A549 (cell line): ENCODE measurements at regions of chr1 and their contacts with region 1.

Region 1: GRCh38 chr1:204431310-204432165 is 19.9 kb upstream of the PPP1R15B start:
- DNase-seq: peak; percentile 79
- ATAC-seq: peak; percentile 82 to 95
- H3K4me3 ChIP-seq: no peak overlapping the region
- H3K27ac ChIP-seq: peak overlapping the region; percentile 28 to 51; a peak in 4 of 6 replicates
- H3K4me1 ChIP-seq: peaks cover 22% of the 10 kb centered on the region
- CTCF ChIP-seq: peak; percentile 92
- EP300 ChIP-seq: no peak
- POLR2A ChIP-seq: 0 out of 2 replicates have a peak, but pooled peaks have one; percentile 10
- RAD21 ChIP-seq: peak; percentile 72

Region 2: GRCh38 chr1:204417231-204417997 is 14.1 kb before region 1 on chr1:
- CTCF ChIA-PET with region 1: interaction called, 40 read pairs
- POLR2A ChIA-PET with region 1: interaction called, 11 read pairs
- DNase-seq: peak; percentile 94 to 97
- ATAC-seq: peak; percentile 91 to 96
- H3K4me3 ChIP-seq: peak overlapping the region; percentile 42
- H3K27ac ChIP-seq: peak overlapping the region; percentile 98 to 100
- H3K4me1 ChIP-seq: peaks cover 76% of the 10 kb centered on the region
- CTCF ChIP-seq: no peak
- EP300 ChIP-seq: peak in 1 of 2 experiments; percentile 38; a peak in 2 of 5 replicates
- POLR2A ChIP-seq: no peak
- RAD21 ChIP-seq: no peak

Region 3: DNA sequence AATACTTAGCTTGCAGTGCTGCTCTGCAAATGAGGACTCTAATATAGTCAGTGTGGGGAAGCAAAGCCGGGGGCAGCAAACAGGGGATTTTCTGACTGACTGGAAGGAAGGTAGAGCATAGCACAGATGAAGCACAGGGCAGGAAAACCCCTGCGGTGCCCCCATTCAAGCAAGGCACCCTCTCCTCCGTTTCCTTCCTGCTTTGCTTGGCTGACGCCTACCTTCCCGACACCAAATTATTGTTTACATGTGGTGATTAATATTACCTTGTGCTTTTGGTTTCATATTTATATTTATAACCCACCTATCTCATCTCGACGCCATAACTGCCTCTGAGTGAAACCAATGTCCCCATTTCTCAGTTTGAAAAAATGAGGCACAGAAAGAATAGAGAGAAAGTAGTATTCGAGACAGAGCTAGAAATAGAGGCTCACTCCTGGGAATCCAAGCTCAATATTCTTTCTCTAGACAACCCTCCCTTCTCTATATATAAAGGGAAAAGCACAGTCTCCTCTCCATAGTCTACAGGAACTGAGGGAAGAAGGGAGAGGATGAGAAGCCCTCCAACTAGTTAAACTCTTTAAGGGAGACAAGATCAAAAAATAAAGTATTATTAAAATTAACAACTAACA is 21.7 kb after region 1 on chr1:
- CTCF ChIA-PET with region 1: interaction called, 276 read pairs
- POLR2A ChIA-PET with region 1: no interaction called
- DNase-seq: no peak
- ATAC-seq: no peak
- H3K4me3 ChIP-seq: no peak overlapping the region
- H3K27ac ChIP-seq: no peak overlapping the region
- H3K4me1 ChIP-seq: peaks cover 36% of the 10 kb centered on the region
- CTCF ChIP-seq: no peak
- EP300 ChIP-seq: no peak
- POLR2A ChIP-seq: no peak
- RAD21 ChIP-seq: no peak

Region 4: DNA sequence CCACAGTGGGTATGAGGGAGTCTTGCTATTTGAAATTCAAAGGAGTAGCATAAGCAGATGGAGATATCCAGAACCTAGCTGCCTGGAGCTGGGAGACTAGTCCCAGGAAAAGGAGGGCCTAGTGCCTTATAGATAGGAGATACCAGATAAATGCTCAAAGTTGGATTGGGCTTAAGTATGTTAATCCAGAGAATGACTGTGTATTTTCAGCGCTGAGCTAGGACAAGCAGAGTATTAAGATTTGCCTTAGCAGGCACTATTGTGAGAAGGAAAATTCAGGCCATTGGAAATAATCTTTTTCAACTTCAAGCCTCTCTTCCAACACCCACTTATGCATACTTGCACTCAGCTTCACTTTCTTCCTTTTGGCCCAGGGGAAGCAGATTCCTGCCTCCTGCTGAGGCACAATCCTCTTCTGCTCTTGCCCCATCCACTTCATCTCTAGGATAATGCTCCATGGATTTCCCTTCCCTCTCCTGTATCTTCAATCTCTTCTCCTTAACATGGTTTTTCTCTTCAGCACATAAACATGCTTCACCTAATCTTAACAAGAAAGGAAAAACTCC is 41.9 kb after region 1 on chr1:
- CTCF ChIA-PET with region 1: interaction called, 13 read pairs
- POLR2A ChIA-PET with region 1: no interaction called
- DNase-seq: no peak
- ATAC-seq: no peak
- H3K4me3 ChIP-seq: no peak overlapping the region
- H3K27ac ChIP-seq: no peak overlapping the region
- H3K4me1 ChIP-seq: peaks cover 8% of the 10 kb centered on the region; the same call in 1 of the 3 replicates
- CTCF ChIP-seq: no peak
- EP300 ChIP-seq: no peak
- POLR2A ChIP-seq: no peak
- RAD21 ChIP-seq: no peak

Region 5: DNA sequence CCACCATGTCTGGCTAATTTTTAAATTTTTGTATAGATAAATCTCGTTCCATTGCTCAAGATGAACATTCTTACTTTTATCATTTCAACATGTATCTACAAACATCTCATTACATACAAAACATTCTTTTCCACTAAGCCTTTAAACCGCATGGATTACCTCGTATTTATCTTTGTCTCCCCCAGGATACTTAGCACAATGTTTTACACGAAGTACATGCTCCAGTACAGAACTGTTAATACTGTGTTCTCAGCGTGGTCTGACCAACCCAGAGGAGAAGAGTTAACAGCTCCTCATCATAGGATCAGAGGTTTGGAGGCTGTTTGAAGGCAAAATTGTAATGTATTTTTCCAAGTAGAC is 55.7 kb after region 1 on chr1:
- CTCF ChIA-PET with region 1: interaction called, 448 read pairs
- POLR2A ChIA-PET with region 1: no interaction called
- DNase-seq: no peak
- ATAC-seq: no peak
- H3K4me3 ChIP-seq: no peak overlapping the region
- H3K27ac ChIP-seq: no peak overlapping the region
- H3K4me1 ChIP-seq: peaks cover 28% of the 10 kb centered on the region
- CTCF ChIP-seq: no peak
- EP300 ChIP-seq: no peak
- POLR2A ChIP-seq: no peak
- RAD21 ChIP-seq: no peak

Region 6: GRCh38 chr1:204516180-204516879 is 84.8 kb after region 1 on chr1 and contains the start of gene MDM4:
- CTCF ChIA-PET with region 1: interaction called, 18 read pairs
- POLR2A ChIA-PET with region 1: no interaction called
- DNase-seq: peak; percentile 96 to 99
- ATAC-seq: peak; percentile 99
- H3K4me3 ChIP-seq: peak within 1 kb of the TSS; percentile 62
- H3K27ac ChIP-seq: peak within 1 kb of the TSS; percentile 96
- H3K4me1 ChIP-seq: peaks cover 12% of the 10 kb centered on the region
- CTCF ChIP-seq: no peak
- EP300 ChIP-seq: 0 out of 5 replicates have a peak, but pooled peaks of 1 of the 2 experiments have one; percentile 23
- POLR2A ChIP-seq: peak; percentile 47
- RAD21 ChIP-seq: no peak
- polyA plus RNA-seq, gene MDM4: 38.9 and 48.9 TPM in 2 replicates